Breast epithelium (tissue), 4 donors: ENCODE measurements at regions of chr7 and their contacts with region 1.

Region 1: DNA sequence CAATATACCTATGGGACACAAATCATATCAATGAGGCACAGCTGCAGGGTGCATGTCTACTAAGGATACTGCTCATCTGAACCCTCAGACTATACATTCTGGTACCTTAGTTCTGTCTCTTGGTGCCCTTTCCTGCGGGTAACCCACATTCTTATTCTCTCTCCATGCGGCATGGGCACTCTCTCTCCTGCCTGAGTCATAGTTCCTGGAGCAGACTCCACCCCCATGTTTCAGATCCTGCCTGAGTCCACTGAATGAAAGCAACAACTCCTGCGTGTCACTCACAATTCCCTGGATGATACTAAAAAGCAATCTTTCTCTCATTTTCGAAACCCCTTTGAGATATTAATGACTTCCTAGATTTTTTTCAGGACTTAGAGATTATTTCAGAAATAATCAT is 653.1 kb upstream of the C7orf33 start:
- DNase-seq: no peak
- H3K4me3 ChIP-seq: no peak overlapping the region
- H3K27ac ChIP-seq: no peak overlapping the region
- H3K4me1 ChIP-seq: no peaks in the 10 kb centered on the region
- H3K27me3 ChIP-seq: no peaks in the 10 kb centered on the region
- CTCF ChIP-seq: no peak
- POLR2A ChIP-seq: no peak

Region 2: GRCh38 chr7:147915781-147916180 is 21.6 kb before region 1 on chr7:
- intact Hi-C with region 1: no loop called
- DNase-seq: no peak
- H3K4me3 ChIP-seq: no peak overlapping the region
- H3K27ac ChIP-seq: no peak overlapping the region
- H3K4me1 ChIP-seq: no peaks in the 10 kb centered on the region
- H3K27me3 ChIP-seq: no peaks in the 10 kb centered on the region
- CTCF ChIP-seq: no peak
- POLR2A ChIP-seq: no peak

Region 3: DNA sequence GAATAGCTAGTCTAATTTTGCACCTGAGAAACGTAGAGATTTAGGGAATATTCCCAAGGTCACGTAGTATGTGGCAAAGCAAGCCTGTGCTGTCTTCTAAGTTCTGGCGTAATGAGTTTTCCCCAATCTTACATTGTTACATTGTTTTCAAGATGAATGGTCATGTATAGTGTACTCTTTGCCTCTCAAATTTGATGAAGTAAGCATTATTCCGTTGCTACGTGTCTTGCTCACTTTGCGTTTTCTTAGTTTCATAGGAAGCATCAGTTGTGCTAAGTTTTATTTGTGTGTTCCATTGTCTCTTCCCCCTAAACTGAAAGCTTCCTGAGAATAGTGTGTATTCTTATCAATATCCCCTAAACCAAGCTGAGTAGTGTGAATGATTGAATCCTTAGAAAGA is 15.5 kb after region 1 on chr7:
- intact Hi-C with region 1: no loop called
- DNase-seq: no peak
- H3K4me3 ChIP-seq: no peak overlapping the region
- H3K27ac ChIP-seq: no peak overlapping the region
- H3K4me1 ChIP-seq: no peaks in the 10 kb centered on the region
- H3K27me3 ChIP-seq: no peaks in the 10 kb centered on the region
- CTCF ChIP-seq: no peak
- POLR2A ChIP-seq: no peak

Region 4: GRCh38 chr7:147968046-147968610 is 30.7 kb after region 1 on chr7:
- intact Hi-C with region 1: loop called (anchors 1 kb)
- DNase-seq: no peak
- H3K4me3 ChIP-seq: no peak overlapping the region
- H3K27ac ChIP-seq: no peak overlapping the region
- H3K4me1 ChIP-seq: no peaks in the 10 kb centered on the region
- H3K27me3 ChIP-seq: no peaks in the 10 kb centered on the region
- CTCF ChIP-seq: no peak
- POLR2A ChIP-seq: no peak